ENCODE measurements at regions of chr2 and their contacts with region 1.

Region 1: DNA sequence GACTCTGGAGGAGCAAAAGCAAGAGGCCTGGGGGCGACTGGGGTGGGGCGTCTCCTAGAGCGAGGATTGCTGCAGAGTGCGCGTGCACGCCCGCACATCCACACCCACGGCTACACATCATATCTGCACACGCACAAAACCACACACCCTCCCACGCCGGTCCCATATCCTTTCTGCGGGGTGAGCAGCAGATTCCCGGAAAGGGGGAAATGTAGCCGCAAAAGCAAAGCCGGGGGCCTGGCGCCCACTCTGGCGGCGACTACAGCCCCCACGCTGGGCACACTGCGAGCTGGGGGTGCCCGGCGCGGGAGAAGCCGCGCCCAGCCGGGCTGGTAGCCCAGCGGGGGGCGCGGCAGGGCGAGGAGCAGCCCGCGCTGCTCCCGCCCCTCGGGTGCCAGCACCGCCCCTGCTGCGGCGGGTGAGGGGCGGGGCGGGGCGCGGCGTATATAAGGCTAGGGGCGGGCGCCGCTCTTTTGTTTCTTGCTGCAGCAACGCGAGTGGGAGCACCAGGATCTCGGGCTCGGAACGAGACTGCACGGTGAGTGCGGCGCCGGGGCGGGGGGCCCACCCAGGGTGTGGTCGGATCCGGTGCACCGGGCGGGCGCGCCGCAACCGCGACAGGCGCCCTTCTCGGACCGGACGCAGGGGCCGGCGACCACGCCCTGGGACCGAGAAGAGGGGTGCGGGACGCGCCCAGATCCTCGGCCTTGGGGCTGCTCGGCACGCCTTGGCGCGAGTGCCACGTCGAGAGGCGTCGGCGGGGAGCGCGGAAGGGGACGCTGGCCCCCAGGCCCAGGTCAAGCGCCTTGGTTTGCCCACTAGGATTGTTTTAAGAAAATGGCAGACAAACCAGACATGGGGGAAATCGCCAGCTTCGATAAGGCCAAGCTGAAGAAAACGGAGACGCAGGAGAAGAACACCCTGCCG is at the start of gene TMSB10:
- DNase-seq: peak; percentile 83 to 95 (median 92)
- ATAC-seq: peak; percentile 70 to 71
- H3K4me3 Mint-ChIP-seq: peak within 1 kb of the TSS; percentile 92 to 98 (median 96)
- H3K27ac Mint-ChIP-seq: peak within 1 kb of the TSS; percentile 91 to 98 (median 96)
- H3K4me1 Mint-ChIP-seq: peaks cover 37 to 78% (median 71%) of the 10 kb centered on the region in 4 donors
- H3K27me3 Mint-ChIP-seq: no peaks in the 10 kb centered on the region
- polyA plus RNA-seq, gene TMSB10: 6,950 to 8,855 (median 7,882) TPM

Region 2: DNA sequence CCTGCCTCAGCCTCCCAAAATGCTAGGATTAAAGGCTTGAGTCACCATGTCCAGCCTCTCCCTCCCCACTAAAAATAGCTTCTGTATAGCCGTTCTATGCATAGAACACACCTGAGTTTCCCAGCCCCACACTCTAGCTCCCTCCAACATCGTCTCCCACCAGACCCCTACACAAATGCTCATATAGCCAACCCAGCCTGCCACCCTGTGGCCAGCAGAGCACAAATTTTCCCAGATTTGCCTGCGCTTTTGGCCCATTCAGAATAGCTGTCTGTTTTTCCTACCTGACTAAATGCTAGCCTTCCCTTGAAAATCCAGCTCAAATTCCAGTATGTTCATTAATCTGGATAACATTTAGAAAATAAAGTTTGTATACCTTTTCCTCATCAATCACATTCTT is 47.3 kb before region 1 on chr2:
- POLR2A ChIA-PET with region 1: interaction called, 17 read pairs
- DNase-seq: peak in 1 of 10 donors; percentile 18
- ATAC-seq: no peak
- H3K4me3 Mint-ChIP-seq: peak overlapping the region; percentile 4 to 87 (median 80)
- H3K27ac Mint-ChIP-seq: peak overlapping the region; percentile 93 to 99 (median 98)
- H3K4me1 Mint-ChIP-seq: peaks cover 75 to 96% (median 94%) of the 10 kb centered on the region in 4 donors
- H3K27me3 Mint-ChIP-seq: no peaks in the 10 kb centered on the region

Region 3: GRCh38 chr2:84870306-84870705 is 35.1 kb before region 1 on chr2:
- POLR2A ChIA-PET with region 1: interaction called, 289 read pairs
- DNase-seq: no peak
- ATAC-seq: no peak
- H3K4me3 Mint-ChIP-seq: peak overlapping the region; percentile 10 to 74 (median 66)
- H3K27ac Mint-ChIP-seq: peak overlapping the region; percentile 80 to 93 (median 91)
- H3K4me1 Mint-ChIP-seq: peaks cover 48 to 90% (median 79%) of the 10 kb centered on the region in 4 donors
- H3K27me3 Mint-ChIP-seq: no peaks in the 10 kb centered on the region

Region 4: DNA sequence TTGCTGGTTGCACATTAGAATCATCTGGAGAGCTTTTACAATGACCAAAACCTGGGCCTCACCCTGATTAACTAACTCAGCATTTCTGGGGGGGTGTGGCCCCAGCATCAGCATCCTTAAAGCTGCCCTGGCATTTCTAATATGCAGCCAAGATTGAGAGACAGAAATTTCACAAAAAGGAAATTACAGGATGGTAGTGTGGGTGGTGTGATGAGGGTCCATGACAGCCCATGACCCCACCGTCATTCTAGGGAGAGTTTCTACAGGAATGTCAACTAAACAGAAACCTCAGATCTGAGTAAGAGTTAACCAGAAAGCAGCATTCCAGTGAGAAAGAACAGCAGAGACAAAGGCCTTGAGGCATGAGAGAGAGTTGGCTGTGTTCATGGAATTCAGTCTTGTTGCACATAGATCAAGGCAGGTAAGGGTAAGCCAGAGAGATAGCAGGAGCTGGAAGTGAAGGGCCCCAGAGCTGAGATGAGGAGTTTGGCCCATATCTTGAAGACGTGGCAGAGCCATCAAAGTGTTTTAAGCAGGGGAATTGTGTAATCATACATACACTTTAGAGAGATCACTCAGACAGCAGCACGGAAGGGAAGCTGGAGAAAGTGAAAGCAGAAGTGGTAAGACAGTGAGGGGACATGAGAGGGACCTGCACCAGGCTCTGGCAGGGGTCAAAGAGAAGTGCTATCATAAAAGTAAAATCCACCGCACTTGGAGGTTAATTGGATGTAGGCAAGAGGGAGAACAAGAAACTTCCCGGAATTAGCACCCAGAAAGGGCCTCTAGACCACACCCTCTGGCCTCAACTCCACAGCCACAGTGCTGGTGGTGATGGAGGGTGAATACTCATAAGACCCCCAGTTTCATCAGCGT is 16.8 kb before region 1 on chr2:
- POLR2A ChIA-PET with region 1: interaction called, 289 read pairs
- DNase-seq: peak in 8 of 10 donors; percentile 40 to 84 (median 56)
- ATAC-seq: peak; percentile 96 to 98
- H3K4me3 Mint-ChIP-seq: peak overlapping the region; percentile 72 to 92 (median 86)
- H3K27ac Mint-ChIP-seq: peak overlapping the region; percentile 94 to 100 (median 98)
- H3K4me1 Mint-ChIP-seq: peaks cover 30 to 73% (median 49%) of the 10 kb centered on the region in 4 donors
- H3K27me3 Mint-ChIP-seq: no peaks in the 10 kb centered on the region

Region 5: DNA sequence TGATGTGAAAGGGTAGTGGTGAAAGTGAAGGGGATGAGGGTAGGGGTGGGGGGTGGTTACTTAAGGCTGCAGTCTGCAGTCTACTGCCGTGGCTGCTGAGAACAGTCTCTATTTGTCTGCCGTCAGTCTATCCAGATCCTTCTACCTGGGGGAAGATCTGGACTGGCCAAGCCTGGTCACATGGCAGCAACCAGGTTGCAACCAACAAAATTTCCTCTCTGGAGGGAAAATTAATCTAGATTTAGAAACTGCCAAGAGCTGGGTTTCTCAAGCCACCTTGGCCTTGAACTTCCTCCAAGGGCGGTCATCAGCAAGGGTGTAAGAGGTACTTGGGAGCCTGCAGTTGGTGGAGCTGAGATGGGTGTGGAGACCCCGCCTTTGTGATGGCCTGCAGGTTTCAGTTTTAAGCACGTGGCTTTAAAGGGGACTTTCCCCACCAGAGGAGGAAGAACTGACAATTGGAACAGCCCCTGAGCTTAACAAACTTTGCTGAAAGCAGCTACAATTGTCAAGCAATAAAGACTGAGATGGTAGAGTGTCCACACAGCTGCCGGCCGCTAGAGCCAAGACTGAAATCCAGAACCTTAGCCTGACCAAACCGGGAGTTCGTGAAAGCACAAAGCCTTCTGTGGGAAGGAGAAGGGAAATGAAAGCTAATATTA is 34.1 kb after region 1 on chr2:
- POLR2A ChIA-PET with region 1: interaction called, 20 read pairs
- DNase-seq: peak; percentile 22 to 82 (median 61)
- ATAC-seq: peak; percentile 90
- H3K4me3 Mint-ChIP-seq: peak overlapping the region; percentile 62 to 90 (median 82)
- H3K27ac Mint-ChIP-seq: peak overlapping the region; percentile 90 to 99 (median 98)
- H3K4me1 Mint-ChIP-seq: peaks cover 10 to 56% (median 28%) of the 10 kb centered on the region in 4 donors
- H3K27me3 Mint-ChIP-seq: no peaks in the 10 kb centered on the region

Measured in naive thymus-derived CD8-positive, alpha-beta T cell (primary cell).